A673 (cell line): ENCODE measurements at regions of chr21 and their contacts with region 1.

Region 1: DNA sequence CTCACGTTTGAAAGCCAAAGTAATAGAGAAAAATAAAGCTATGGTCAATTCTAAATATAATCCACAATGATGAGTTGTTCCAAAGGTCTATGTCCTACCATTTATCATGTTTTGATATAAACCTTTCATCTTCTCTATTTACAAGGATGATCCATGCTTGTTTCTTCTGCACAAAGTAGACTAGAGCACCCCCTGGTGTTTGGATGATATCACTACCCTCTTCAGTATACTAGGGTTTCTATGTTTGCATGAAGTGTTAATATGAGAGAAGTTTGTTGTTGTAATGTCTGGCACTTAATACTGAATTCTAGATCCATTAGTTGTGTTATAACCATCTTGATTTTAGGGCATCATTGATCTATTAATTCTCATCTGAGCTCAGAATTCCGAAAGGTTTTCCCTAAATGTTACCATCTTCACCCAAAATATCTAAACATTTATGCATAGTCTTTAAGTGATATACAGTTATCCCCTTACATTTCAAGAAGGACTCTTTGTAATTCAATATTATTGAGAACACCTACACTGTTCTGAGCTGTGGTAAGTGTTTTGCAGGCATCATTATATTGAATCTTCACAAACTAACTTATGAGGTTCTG is 21.1 kb downstream of the CLDN8 start:
- DNase-seq: peak; percentile 75
- H3K4me3 ChIP-seq: no peak overlapping the region
- H3K27ac ChIP-seq: no peak overlapping the region
- H3K4me1 ChIP-seq: no peaks in the 10 kb centered on the region
- H3K27me3 ChIP-seq: peaks cover 7% of the 10 kb centered on the region
- CTCF ChIP-seq: peak; percentile 79

Region 2: DNA sequence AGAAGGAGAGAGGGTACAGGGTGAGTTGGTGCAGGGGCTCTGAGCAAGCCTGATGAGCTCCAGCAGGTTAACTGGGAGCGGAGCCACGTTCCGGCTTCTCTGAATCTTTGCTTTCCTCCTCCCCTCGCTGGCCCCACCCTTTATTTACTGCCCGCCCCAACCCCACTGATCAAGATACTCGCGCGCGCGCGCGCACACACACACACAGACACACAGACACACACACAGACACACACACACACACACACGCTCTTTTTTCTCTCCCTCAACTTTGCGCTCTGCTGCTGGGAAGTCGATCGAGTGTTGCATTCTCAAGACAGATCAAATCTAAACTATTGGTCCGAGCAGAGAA is 254.9 kb before region 1 on chr21 and contains the start of gene GRIK1:
- CTCF ChIA-PET with region 1: no interaction called
- POLR2A ChIA-PET with region 1: no interaction called
- intact Hi-C with region 1: loop called (anchors 5 kb)
- DNase-seq: peak; percentile 60
- H3K4me3 ChIP-seq: peak within 1 kb of the TSS; percentile 48
- H3K27ac ChIP-seq: no peak within 1 kb of the TSS
- H3K4me1 ChIP-seq: peaks cover 5% of the 10 kb centered on the region
- H3K27me3 ChIP-seq: peaks cover 53% of the 10 kb centered on the region
- CTCF ChIP-seq: no peak
- total RNA-seq, gene GRIK1: 0.67 and 0.85 TPM in 2 replicates

Region 3: DNA sequence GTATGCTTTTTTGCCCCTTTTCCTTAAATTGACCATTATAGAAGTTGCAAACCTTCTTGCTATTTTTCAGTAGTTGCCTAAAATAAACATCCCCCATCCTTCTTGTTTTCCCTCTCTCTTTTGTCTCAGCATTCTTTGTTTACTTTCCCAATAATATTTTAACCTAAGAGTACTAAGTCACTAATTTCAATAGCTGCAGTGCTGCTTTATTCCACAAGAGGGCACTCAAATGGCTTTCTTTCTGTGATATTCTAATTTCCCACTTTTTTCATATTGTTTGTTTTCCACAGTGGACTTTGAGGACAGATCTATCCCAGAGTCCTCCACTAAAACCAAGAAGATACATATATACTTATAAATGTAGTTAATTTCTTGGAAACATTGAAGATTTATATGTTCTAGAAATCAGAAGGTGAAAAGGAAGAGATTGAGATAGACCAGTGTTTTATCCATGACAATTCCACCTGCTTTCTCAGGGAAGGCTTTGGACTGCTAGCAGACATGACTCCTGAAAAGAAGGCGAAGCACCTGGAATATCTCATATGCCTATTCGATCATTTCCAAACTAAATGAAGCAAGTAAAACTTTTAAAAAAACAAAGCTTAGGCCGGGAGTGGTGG is 150.2 kb before region 1 on chr21:
- CTCF ChIA-PET with region 1: no interaction called
- POLR2A ChIA-PET with region 1: no interaction called
- intact Hi-C with region 1: loop called (anchors 2 kb)
- DNase-seq: peak; percentile 45
- H3K4me3 ChIP-seq: no peak overlapping the region
- H3K27ac ChIP-seq: no peak overlapping the region
- H3K4me1 ChIP-seq: no peaks in the 10 kb centered on the region
- H3K27me3 ChIP-seq: no peaks in the 10 kb centered on the region
- CTCF ChIP-seq: peak; percentile 93

Region 4: DNA sequence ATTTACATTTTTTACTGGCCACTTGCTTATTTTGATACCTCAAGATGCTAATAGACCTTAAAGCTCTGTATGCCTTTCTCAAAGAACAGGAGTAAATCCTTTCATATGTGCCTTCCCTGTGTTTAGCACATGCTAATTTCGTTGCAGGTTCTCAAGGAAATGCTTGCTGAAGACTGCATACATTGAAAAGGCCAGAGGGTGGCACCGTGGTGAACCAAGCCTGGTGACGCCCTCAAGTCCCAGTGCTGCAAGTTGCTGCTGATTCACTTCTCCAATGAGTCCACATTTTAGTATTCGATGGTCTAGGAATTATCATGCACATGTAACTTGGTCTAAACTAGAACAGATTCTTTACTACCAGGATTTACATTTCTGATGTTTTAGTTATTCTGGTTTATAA is 122.3 kb before region 1 on chr21:
- CTCF ChIA-PET with region 1: no interaction called
- POLR2A ChIA-PET with region 1: no interaction called
- intact Hi-C with region 1: loop called (anchors 5 kb)
- DNase-seq: peak; percentile 53
- H3K4me3 ChIP-seq: no peak overlapping the region
- H3K27ac ChIP-seq: no peak overlapping the region
- H3K4me1 ChIP-seq: no peaks in the 10 kb centered on the region
- H3K27me3 ChIP-seq: peaks cover 17% of the 10 kb centered on the region
- CTCF ChIP-seq: peak; percentile 49

Region 5: GRCh38 chr21:30297476-30297875 is 102.7 kb after region 1 on chr21:
- CTCF ChIA-PET with region 1: no interaction called
- POLR2A ChIA-PET with region 1: no interaction called
- intact Hi-C with region 1: no loop called
- DNase-seq: no peak
- H3K4me3 ChIP-seq: no peak overlapping the region
- H3K27ac ChIP-seq: no peak overlapping the region
- H3K4me1 ChIP-seq: no peaks in the 10 kb centered on the region
- H3K27me3 ChIP-seq: peaks cover 9% of the 10 kb centered on the region
- CTCF ChIP-seq: no peak